ENCODE measurements at regions of chr5 and their contacts with region 1.

Region 1: DNA sequence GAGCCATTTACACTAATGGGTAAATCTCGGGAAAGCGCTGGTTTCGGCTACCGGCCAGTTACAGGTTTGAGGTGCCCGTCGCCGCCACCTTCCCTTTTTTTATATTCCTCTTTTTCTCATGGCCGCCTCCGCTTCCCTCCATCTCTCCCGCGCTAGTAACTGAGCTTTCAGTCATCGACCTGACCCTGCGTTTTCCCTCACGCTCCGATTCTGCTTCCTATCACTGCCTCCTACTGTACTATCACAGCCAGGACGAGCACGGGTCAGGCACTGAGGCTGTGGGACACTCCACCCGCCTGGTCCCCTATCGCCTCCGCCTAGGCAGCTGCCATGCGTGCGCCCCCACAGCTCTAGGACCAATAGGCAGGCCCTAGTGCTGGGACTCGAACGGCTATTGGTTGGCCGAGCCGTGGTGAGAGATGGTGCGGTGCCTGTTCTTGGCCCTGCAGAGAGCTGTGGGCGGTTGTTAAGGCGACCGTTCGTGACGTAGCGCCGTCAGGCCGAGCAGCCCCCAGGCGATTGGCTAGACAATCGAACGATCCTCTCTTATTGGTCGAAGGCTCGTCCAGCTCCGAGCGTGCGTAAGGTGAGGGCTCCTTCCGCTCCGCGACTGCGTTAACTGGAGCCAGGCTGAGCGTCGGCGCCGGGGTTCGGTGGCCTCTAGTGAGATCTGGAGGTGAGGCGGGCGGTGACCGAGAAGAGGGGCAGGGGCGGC is at the start of gene HMGCR:
- DNase-seq: peak; percentile 97 to 99
- H3K4me3 ChIP-seq: peak within 1 kb of the TSS; percentile 81
- H3K4me1 ChIP-seq: peaks cover 24% of the 10 kb centered on the region
- H3K27me3 ChIP-seq: no peaks in the 10 kb centered on the region

Region 2: GRCh38 chr5:75053304-75054133 is 283.3 kb before region 1 on chr5:
- in situ Hi-C with region 1: loop called (anchors 5 kb)
- DNase-seq: peak; percentile 34 to 67
- H3K4me3 ChIP-seq: peak overlapping the region; percentile 53
- H3K4me1 ChIP-seq: peaks cover 8% of the 10 kb centered on the region
- H3K27me3 ChIP-seq: no peaks in the 10 kb centered on the region

Region 3: DNA sequence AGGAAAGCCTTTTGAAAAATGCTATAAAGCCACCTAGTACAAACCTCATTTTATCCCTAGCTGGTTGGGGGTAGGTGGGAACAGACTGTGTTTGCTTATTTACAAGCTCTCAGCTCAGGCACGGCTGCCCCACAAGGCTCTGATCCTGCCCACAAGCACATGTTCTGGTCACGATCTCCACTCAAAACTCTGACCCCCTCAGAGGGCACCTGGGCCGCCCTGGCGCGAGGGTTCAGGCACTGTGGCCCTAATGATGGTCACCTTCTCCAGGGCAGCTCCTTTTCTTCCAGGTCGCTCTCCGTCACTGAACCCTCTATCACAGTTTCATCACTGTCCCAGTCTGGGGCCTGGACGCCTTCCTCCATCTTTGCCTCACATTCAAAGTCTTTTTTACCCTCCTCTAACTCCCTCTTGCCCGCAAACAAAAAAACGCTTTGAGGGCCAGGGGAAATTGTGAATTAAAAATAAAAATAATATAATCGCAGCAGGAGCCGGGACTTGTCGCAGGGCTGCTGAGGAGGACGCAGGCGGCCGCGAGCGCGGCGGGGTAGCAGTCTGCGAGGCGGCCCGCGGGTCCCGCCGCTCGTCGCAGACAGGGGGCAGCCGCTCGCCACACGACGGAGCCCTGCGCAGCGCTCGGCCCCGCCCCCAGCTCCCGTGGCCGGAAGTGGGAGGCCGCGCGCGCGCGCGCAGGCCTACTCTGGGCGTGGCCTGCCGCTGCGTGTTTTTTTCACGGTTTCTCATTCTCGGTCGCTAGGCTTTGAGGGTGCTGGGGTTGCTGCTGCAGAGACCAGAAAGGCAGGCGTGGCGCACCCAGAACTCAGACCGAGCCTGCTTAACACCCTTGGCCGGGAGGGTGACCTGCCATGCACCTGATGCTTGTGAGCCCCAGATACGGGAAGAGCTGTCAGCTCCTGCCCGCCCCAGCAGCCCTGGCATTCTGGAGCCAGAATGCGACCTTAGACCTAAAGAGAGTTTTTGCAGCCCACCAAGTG is 100.2 kb before region 1 on chr5 and contains the start of gene ANKRD31:
- in situ Hi-C with region 1: no loop called
- DNase-seq: peak; percentile 78 to 87
- H3K4me3 ChIP-seq: peak within 1 kb of the TSS; percentile 53
- H3K4me1 ChIP-seq: peaks cover 14% of the 10 kb centered on the region
- H3K27me3 ChIP-seq: no peaks in the 10 kb centered on the region

Measured in HAP-1 (cell line).